IMR-90 (cell line): ENCODE measurements at regions of chr2 and their contacts with region 1.

Region 1: GRCh38 chr2:199452205-199452990 is 5.3 kb downstream of the SATB2 start:
- DNase-seq: no peak
- ATAC-seq: no peak
- H3K4me3 ChIP-seq: no peak overlapping the region
- H3K27ac ChIP-seq: no peak overlapping the region
- H3K4me1 ChIP-seq: peaks cover 2% of the 10 kb centered on the region; the same call in 1 of the 2 replicates
- H3K27me3 ChIP-seq: no peaks in the 10 kb centered on the region
- CTCF ChIP-seq: no peak
- POLR2A ChIP-seq: no peak
- RAD21 ChIP-seq: no peak

Region 2: DNA sequence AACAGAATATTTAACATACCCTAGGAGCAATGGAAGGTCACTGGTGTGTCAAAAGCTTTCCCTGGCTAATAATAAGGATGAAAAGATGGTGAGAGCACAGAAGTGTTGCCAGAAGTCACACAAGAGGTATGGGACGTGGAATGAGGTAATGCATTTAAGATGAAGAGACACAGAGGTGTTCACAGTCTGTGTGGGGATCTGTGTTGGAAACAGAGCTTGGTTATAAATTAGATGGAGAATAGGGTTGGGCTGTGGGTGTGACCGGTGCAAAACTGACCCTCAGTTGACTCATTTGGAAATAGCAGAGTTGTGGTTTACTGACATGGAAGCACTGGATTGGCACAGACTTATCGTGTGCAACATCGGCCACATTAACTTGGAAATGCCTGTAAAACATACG is 367.1 kb before region 1 on chr2:
- CTCF ChIA-PET with region 1: no interaction called
- POLR2A ChIA-PET with region 1: no interaction called
- dilution Hi-C with region 1: no loop called
- in situ Hi-C with region 1: no loop called
- intact Hi-C with region 1: no loop called
- DNase-seq: no peak
- ATAC-seq: no peak
- H3K4me3 ChIP-seq: no peak overlapping the region
- H3K27ac ChIP-seq: no peak overlapping the region
- H3K4me1 ChIP-seq: no peaks in the 10 kb centered on the region
- H3K27me3 ChIP-seq: no peaks in the 10 kb centered on the region
- CTCF ChIP-seq: no peak
- POLR2A ChIP-seq: no peak
- RAD21 ChIP-seq: no peak

Region 3: DNA sequence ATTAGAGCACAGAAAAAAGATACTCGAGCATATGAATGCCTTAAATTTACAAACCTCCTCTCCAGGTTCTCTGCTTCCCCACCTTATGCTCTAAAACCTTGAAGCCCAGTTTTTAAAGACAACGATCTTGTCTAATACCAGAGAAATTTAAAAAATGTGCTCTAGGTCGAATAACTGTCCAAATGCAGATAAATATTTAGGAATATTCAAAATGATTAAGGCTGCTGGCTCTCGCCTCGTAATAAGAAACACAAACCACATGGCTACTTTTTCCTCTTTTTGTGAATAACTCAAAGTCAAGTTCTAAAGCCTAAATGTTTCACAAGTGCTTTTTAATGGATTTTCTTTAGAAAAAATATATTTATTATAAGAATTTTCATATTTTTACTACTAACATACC is 96.0 kb before region 1 on chr2:
- CTCF ChIA-PET with region 1: no interaction called
- POLR2A ChIA-PET with region 1: no interaction called
- dilution Hi-C with region 1: no loop called
- in situ Hi-C with region 1: no loop called
- intact Hi-C with region 1: loop called (anchors 5 kb)
- DNase-seq: peak; percentile 47
- ATAC-seq: peak; percentile 65
- H3K4me3 ChIP-seq: no peak overlapping the region
- H3K27ac ChIP-seq: no peak overlapping the region
- H3K4me1 ChIP-seq: peaks cover 3% of the 10 kb centered on the region; the same call in 1 of the 2 replicates
- H3K27me3 ChIP-seq: no peaks in the 10 kb centered on the region
- CTCF ChIP-seq: no peak
- POLR2A ChIP-seq: no peak
- RAD21 ChIP-seq: no peak

Region 4: GRCh38 chr2:199607914-199608313 is 155.5 kb after region 1 on chr2:
- CTCF ChIA-PET with region 1: no interaction called
- POLR2A ChIA-PET with region 1: no interaction called
- dilution Hi-C with region 1: no loop called
- in situ Hi-C with region 1: no loop called
- intact Hi-C with region 1: no loop called
- DNase-seq: no peak
- ATAC-seq: no peak
- H3K4me3 ChIP-seq: no peak overlapping the region
- H3K27ac ChIP-seq: no peak overlapping the region
- H3K4me1 ChIP-seq: no peaks in the 10 kb centered on the region
- H3K27me3 ChIP-seq: peaks cover 11% of the 10 kb centered on the region
- CTCF ChIP-seq: no peak
- POLR2A ChIP-seq: no peak
- RAD21 ChIP-seq: no peak